IMR-90 (cell line): ENCODE measurements at regions of chr18 and their contacts with region 1.

Region 1: GRCh38 chr18:37465958-37466357 is 99.6 kb downstream of the CELF4 start:
- DNase-seq: no peak
- ATAC-seq: no peak
- H3K4me3 ChIP-seq: no peak overlapping the region
- H3K27ac ChIP-seq: no peak overlapping the region
- H3K4me1 ChIP-seq: no peaks in the 10 kb centered on the region
- H3K27me3 ChIP-seq: peaks cover 31% of the 10 kb centered on the region
- CTCF ChIP-seq: no peak
- POLR2A ChIP-seq: no peak
- RAD21 ChIP-seq: no peak

Region 2: DNA sequence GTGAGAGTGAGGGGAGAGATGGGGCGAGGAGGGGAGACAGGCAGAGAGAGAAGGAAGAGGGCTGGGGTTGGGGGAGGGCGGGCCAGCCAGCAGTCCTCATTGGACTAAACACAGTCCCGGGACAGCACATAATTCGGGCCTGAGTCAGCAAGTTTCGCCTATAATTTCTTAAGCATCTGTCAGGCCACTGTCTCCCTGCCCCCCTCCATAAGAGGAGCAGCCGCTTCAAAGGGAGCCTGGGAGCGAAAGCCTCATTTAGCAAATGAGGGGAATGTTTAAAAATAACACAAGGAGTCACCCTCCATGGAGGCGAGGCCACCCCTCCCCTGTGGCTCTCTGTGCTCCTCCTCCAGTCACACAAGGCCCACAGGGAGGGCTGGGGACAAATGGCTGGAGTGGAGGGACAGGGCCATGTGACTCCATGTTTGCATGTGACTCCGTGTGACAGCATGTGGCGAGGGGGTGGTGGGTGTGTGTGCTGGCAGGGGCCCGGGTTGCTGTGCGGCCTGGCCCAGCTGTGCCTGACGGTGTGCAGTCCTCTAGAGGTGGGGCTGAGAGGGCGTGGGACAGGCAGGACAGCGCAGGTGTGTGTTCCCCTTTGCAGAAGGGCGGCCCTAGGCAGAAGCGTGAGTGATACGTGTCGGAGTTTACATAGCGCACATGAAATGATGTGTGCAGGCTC is 62.7 kb before region 1 on chr18:
- CTCF ChIA-PET with region 1: no interaction called
- POLR2A ChIA-PET with region 1: no interaction called
- dilution Hi-C with region 1: no loop called
- in situ Hi-C with region 1: loop called (anchors 10 kb)
- intact Hi-C with region 1: no loop called
- DNase-seq: peak; percentile 86
- ATAC-seq: peak; percentile 96
- H3K4me3 ChIP-seq: no peak overlapping the region
- H3K27ac ChIP-seq: peak overlapping the region; percentile 88
- H3K4me1 ChIP-seq: peaks cover 12% of the 10 kb centered on the region; the same call in 1 of the 2 replicates
- H3K27me3 ChIP-seq: no peaks in the 10 kb centered on the region
- CTCF ChIP-seq: no peak
- POLR2A ChIP-seq: no peak
- RAD21 ChIP-seq: no peak

Region 3: DNA sequence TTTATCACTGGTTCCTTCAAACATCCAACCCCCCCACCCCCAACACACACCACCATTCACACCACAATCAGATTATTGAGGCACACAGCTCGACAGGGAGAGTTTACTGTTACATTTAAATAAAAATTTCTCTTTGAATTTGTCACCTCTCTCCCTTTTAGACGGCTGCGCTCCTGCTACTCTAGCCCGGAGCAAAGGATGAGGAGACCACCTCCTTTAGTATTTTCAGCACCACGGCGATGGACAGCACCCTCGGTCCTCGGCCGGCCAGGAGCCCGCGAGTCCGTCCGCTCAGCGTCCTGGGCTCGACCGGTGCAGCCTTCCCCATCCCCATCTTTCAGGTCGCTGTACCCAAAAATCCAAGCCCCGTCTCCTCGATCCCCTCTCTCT is 98.7 kb after region 1 on chr18:
- CTCF ChIA-PET with region 1: no interaction called
- POLR2A ChIA-PET with region 1: no interaction called
- dilution Hi-C with region 1: no loop called
- in situ Hi-C with region 1: no loop called
- intact Hi-C with region 1: no loop called
- DNase-seq: peak; percentile 21
- ATAC-seq: peak; percentile 35; the same call in 1 of the 2 replicates
- H3K4me3 ChIP-seq: no peak overlapping the region
- H3K27ac ChIP-seq: no peak overlapping the region
- H3K4me1 ChIP-seq: peaks cover 1% of the 10 kb centered on the region; the same call in 1 of the 2 replicates
- H3K27me3 ChIP-seq: peaks cover 45% of the 10 kb centered on the region
- CTCF ChIP-seq: no peak
- POLR2A ChIP-seq: no peak
- RAD21 ChIP-seq: no peak

Region 4: DNA sequence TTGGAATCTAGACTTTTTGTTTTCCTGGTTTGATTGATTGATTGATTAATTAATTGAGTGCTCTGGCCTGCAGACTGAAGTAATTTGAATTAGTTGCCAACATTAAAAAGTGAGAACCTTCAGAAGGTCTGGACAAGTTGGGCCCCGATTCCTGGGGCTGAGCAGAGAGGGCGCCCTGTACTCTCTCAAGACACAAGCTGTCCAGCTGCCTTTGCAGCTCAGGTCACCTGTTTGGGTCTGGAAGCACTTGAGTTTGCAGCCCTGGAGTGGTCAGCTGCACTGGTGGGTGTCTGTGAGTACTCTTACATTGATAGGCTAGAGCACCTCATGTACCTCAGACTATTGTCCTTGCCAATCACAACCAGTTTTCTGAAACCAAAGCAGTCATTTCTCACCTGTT is 122.3 kb after region 1 on chr18:
- CTCF ChIA-PET with region 1: no interaction called
- POLR2A ChIA-PET with region 1: no interaction called
- dilution Hi-C with region 1: no loop called
- in situ Hi-C with region 1: no loop called
- intact Hi-C with region 1: no loop called
- DNase-seq: no peak
- ATAC-seq: no peak
- H3K4me3 ChIP-seq: no peak overlapping the region
- H3K27ac ChIP-seq: no peak overlapping the region
- H3K4me1 ChIP-seq: no peaks in the 10 kb centered on the region
- H3K27me3 ChIP-seq: no peaks in the 10 kb centered on the region
- CTCF ChIP-seq: no peak
- POLR2A ChIP-seq: no peak
- RAD21 ChIP-seq: no peak